ENCODE measurements at regions of chr17 and their contacts with region 1.

Region 1: GRCh38 chr17:17440010-17440843 is 36.6 kb upstream of the MED9 start:
- DNase-seq: peak; percentile 74 to 89
- H3K4me3 ChIP-seq: no peak overlapping the region
- H3K27ac ChIP-seq: no peak overlapping the region
- H3K4me1 ChIP-seq: peaks cover 0 to 7% (median 3%) of the 10 kb centered on the region in 4 experiments; a peak in 3 of 7 replicates
- H3K27me3 ChIP-seq: no peaks in the 10 kb centered on the region
- CTCF ChIP-seq: peak; percentile 66 to 87 (median 75)
- EP300 ChIP-seq: no peak
- POLR2A ChIP-seq: no peak
- RAD21 ChIP-seq: peak; percentile 50 to 70

Region 2: GRCh38 chr17:17406225-17406624 is 34.0 kb before region 1 on chr17:
- CTCF ChIA-PET with region 1: no interaction called
- POLR2A ChIA-PET with region 1: no interaction called
- DNase-seq: no peak
- H3K4me3 ChIP-seq: no peak overlapping the region
- H3K27ac ChIP-seq: no peak overlapping the region
- H3K4me1 ChIP-seq: 0 out of 7 replicates have a peak, but pooled peaks cover 0 to 5% (median 2%) of the 10 kb centered on the region in 4 experiments
- H3K27me3 ChIP-seq: no peaks in the 10 kb centered on the region; a peak in 1 of 7 replicates
- CTCF ChIP-seq: no peak
- EP300 ChIP-seq: no peak
- POLR2A ChIP-seq: no peak
- RAD21 ChIP-seq: no peak

Region 3: GRCh38 chr17:17420561-17421269 is 19.5 kb before region 1 on chr17:
- CTCF ChIA-PET with region 1: interaction called, 18 read pairs
- POLR2A ChIA-PET with region 1: no interaction called
- DNase-seq: no peak
- H3K4me3 ChIP-seq: no peak overlapping the region
- H3K27ac ChIP-seq: no peak overlapping the region
- H3K4me1 ChIP-seq: no peaks in the 10 kb centered on the region
- H3K27me3 ChIP-seq: no peaks in the 10 kb centered on the region
- CTCF ChIP-seq: no peak
- EP300 ChIP-seq: no peak
- POLR2A ChIP-seq: no peak
- RAD21 ChIP-seq: no peak

Region 4: DNA sequence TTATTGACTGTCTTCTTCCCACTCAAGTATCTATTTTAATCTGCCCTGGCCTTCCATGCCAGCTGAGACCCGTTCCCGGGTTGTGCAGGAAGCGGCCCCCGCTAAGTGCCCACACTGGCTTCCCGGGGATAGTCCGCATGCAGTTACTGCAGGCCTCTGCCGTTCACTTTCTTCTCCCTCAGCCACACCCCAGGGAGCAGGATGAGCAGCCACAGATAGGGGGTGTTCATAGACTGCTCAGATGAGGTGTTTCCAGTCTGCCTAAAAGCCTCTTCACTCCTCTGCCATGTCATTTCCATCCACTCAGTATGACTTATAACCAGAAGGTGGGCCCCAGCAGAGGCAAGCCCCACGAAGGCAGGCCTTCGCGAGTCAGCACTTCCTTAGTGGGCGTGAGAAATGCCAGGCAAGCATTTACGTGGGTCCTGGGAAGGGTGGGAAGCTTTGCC is 44.2 kb after region 1 on chr17:
- CTCF ChIA-PET with region 1: no interaction called
- POLR2A ChIA-PET with region 1: no interaction called
- DNase-seq: no peak
- H3K4me3 ChIP-seq: no peak overlapping the region
- H3K27ac ChIP-seq: no peak overlapping the region
- H3K4me1 ChIP-seq: no peaks in the 10 kb centered on the region
- H3K27me3 ChIP-seq: no peaks in the 10 kb centered on the region
- CTCF ChIP-seq: no peak
- EP300 ChIP-seq: no peak
- POLR2A ChIP-seq: no peak
- RAD21 ChIP-seq: no peak